ENCODE measurements at regions of chr14 and their contacts with region 1.

Region 1: GRCh38 chr14:100285021-100285912 is 21.0 kb downstream of the SLC25A29 start:
- DNase-seq: peak; percentile 75
- H3K4me3 Mint-ChIP-seq: peak overlapping the region; percentile 69
- H3K27ac Mint-ChIP-seq: no peak overlapping the region
- H3K4me1 Mint-ChIP-seq: peaks cover 8% of the 10 kb centered on the region
- H3K27me3 Mint-ChIP-seq: no peaks in the 10 kb centered on the region

Region 2: GRCh38 chr14:99793213-99794150 is 491.8 kb before region 1 on chr14 and contains the start of gene EML1:
- CTCF ChIA-PET with region 1: no interaction called
- intact Hi-C with region 1: loop called (anchors 5 kb)
- DNase-seq: peak; percentile 77
- H3K4me3 Mint-ChIP-seq: peak within 1 kb of the TSS; percentile 58
- H3K27ac Mint-ChIP-seq: peak within 1 kb of the TSS; percentile 15
- H3K4me1 Mint-ChIP-seq: peaks cover 21% of the 10 kb centered on the region
- H3K27me3 Mint-ChIP-seq: peaks cover 14% of the 10 kb centered on the region
- total RNA-seq, gene EML1: 0.91 to 1.2 TPM

Region 3: DNA sequence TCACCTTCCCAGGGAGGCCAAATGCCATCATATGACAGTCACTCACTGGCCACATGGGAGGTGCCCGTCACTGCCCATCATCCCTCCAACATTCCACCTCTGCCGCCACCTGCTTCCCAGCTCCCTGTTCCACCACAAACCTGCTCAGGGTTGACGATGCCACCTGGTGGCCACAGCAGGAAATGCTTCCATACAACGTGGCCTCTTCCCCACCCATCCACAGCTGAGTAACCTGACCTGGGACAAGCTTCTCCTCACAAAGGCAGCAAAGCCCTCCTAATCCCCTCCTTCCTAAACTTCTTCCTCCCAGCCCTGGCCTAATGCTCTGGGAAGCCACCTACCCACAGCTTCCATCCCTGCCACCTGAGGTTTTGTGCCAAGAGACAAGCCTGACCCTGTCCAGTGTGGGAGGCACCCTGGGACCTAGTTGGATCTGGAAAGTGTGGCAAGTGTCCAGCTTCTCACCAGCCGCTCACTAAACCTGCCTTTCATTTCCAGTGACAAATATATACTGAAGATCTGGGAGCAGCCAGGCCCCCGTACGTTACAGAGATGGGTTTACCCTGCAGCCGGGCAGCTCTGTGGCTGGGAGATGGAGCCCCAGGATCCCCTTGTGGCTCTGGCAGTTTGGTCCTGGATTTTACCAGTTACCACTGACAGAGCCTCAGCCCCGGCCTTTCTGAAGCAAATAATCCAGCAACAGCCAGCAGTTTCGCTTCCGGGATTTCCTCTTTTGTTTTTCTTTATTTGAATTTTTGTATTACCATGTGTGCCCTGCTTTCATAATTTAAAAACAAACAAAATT is 130.0 kb before region 1 on chr14:
- CTCF ChIA-PET with region 1: no interaction called
- intact Hi-C with region 1: no loop called
- DNase-seq: peak; percentile 60
- H3K4me3 Mint-ChIP-seq: no peak overlapping the region
- H3K27ac Mint-ChIP-seq: no peak overlapping the region
- H3K4me1 Mint-ChIP-seq: no peaks in the 10 kb centered on the region
- H3K27me3 Mint-ChIP-seq: peaks cover 17% of the 10 kb centered on the region

Region 4: DNA sequence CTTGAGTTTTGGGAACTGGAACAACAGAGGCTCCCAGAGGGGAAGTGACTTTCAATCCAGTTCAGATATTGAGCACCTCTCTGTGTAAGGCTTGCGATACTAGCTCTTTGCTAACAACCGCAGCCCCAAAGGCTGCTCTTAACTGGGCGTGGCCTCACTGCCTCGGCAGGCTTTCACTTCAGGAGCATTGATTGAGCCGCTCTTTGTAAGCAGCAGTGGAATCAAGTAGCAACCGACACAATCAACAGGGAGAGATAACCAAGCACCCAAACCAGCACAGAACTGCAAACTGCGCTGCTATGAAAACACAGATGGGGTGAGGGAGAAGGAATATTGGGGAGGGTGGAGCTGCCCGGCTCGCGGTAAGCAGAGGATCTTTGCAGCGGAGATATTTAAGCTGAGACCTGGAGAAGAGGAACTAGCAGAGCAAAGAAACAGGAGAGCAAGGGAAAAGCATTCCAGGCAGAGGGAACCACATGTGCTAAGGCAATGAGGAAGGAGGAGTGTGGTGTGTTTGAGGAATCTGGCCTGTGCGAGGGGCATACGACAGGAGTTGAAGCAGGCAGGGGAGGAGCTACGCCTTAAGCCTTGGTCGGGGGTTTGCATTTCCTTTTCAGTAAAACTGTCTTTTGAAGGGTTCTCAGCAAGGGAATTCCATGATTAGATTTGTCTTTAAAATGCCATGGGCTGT is 63.6 kb before region 1 on chr14:
- CTCF ChIA-PET with region 1: interaction called, 13 read pairs
- intact Hi-C with region 1: no loop called
- DNase-seq: peak; percentile 81
- H3K4me3 Mint-ChIP-seq: no peak overlapping the region
- H3K27ac Mint-ChIP-seq: no peak overlapping the region
- H3K4me1 Mint-ChIP-seq: peaks cover 8% of the 10 kb centered on the region
- H3K27me3 Mint-ChIP-seq: no peaks in the 10 kb centered on the region

Region 5: DNA sequence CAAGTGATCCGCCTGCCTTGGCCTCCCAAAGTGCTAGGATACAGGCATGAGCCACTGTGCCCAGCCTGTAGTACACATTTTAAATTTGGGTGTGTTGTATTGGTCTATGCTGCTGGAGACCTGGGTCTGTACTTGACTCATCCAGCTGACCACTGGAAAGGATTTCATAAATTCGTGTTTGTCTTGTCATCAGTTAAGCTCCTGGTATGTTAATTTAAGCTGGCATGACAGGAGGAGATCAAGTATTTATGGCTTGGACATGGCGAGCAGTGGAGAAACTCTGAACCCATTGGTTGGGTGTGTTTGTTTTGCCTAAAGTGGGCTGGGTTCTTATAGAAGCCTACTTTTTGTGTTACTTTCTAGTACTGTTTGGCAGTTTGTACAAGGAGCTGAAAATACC is 22.1 kb before region 1 on chr14:
- CTCF ChIA-PET with region 1: interaction called, 14 read pairs
- intact Hi-C with region 1: no loop called
- DNase-seq: no peak
- H3K4me3 Mint-ChIP-seq: no peak overlapping the region
- H3K27ac Mint-ChIP-seq: peak overlapping the region; percentile 37
- H3K4me1 Mint-ChIP-seq: peaks cover 81% of the 10 kb centered on the region
- H3K27me3 Mint-ChIP-seq: no peaks in the 10 kb centered on the region

Region 6: GRCh38 chr14:100297302-100298300 is 12.3 kb after region 1 on chr14:
- CTCF ChIA-PET with region 1: interaction called, 24 read pairs
- intact Hi-C with region 1: no loop called
- DNase-seq: no peak
- H3K4me3 Mint-ChIP-seq: no peak overlapping the region
- H3K27ac Mint-ChIP-seq: no peak overlapping the region
- H3K4me1 Mint-ChIP-seq: peaks cover 2% of the 10 kb centered on the region
- H3K27me3 Mint-ChIP-seq: no peaks in the 10 kb centered on the region

Region 7: GRCh38 chr14:100317912-100318808 is 32.9 kb after region 1 on chr14:
- CTCF ChIA-PET with region 1: interaction called, 5 read pairs
- intact Hi-C with region 1: loop called (anchors 2 kb)
- DNase-seq: peak; percentile 71
- H3K4me3 Mint-ChIP-seq: peak overlapping the region; percentile 58
- H3K27ac Mint-ChIP-seq: no peak overlapping the region
- H3K4me1 Mint-ChIP-seq: peaks cover 3% of the 10 kb centered on the region
- H3K27me3 Mint-ChIP-seq: no peaks in the 10 kb centered on the region

Region 8: GRCh38 chr14:100375963-100376735 is 90.9 kb after region 1 on chr14:
- CTCF ChIA-PET with region 1: interaction called, 8 read pairs
- intact Hi-C with region 1: loop called (anchors 1 kb)
- DNase-seq: peak; percentile 94
- H3K4me3 Mint-ChIP-seq: peak within 1 kb of the TSS; percentile 99
- H3K27ac Mint-ChIP-seq: peak within 1 kb of the TSS; percentile 98
- H3K4me1 Mint-ChIP-seq: peaks cover 45% of the 10 kb centered on the region
- H3K27me3 Mint-ChIP-seq: no peaks in the 10 kb centered on the region